Common myeloid progenitor, CD34-positive (primary cell): ENCODE measurements at regions of chr22 and their contacts with region 1.

Region 1: DNA sequence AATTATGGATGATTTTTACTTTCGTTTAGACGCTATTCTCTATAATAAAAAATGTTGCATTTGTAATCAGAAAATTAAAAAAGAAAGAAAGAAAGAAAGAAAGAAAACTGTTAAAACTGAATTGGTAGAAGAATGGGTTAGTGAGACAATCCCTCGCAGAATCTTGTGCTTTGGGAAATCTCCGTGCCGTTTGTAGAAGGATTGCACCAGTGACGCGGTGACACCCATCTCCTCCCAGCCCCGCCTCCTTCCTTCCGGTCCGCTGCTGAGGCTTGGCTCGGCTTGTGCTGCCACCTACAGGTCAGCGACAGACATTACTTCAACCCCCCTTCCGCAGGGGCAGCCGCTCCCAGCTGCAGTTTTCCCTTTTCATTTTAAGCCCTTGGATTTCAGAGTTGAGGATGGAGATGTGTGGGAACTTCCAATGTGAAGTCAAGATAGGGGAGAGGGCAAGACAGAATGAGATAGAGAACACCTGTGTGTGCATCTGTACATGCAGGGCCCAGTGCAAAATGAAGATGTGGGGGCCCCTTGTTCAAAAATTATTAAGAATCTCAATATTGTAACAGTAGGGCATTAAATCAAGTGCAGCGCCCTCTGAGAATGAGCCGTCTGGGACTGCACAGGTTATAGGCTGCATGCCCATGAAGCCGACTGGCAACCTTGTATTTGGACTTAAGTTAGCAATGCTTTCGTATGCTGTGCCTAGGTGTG is 41.1 kb downstream of the TST start:
- DNase-seq: peak; percentile 86 to 92 (median 90)
- H3K4me3 ChIP-seq: peak overlapping the region in 6 of 7 experiments; percentile 57 to 82 (median 69)
- H3K27ac ChIP-seq: peak overlapping the region in 1 of 2 experiments; percentile 61
- H3K4me1 ChIP-seq: peaks cover 0 to 9% (median 7%) of the 10 kb centered on the region in 4 experiments
- H3K27me3 ChIP-seq: peaks cover 0 to 3% (median 0%) of the 10 kb centered on the region in 5 experiments

Region 2: GRCh38 chr22:36966851-36967540 is 11.1 kb before region 1 on chr22:
- CTCF ChIA-PET with region 1: interaction called, 29 read pairs
- POLR2A ChIA-PET with region 1: interaction called, 4 read pairs
- DNase-seq: no peak
- H3K4me3 ChIP-seq: no peak overlapping the region
- H3K27ac ChIP-seq: no peak overlapping the region
- H3K4me1 ChIP-seq: peaks cover 0 to 7% (median 0%) of the 10 kb centered on the region in 4 experiments
- H3K27me3 ChIP-seq: no peaks in the 10 kb centered on the region

Region 3: DNA sequence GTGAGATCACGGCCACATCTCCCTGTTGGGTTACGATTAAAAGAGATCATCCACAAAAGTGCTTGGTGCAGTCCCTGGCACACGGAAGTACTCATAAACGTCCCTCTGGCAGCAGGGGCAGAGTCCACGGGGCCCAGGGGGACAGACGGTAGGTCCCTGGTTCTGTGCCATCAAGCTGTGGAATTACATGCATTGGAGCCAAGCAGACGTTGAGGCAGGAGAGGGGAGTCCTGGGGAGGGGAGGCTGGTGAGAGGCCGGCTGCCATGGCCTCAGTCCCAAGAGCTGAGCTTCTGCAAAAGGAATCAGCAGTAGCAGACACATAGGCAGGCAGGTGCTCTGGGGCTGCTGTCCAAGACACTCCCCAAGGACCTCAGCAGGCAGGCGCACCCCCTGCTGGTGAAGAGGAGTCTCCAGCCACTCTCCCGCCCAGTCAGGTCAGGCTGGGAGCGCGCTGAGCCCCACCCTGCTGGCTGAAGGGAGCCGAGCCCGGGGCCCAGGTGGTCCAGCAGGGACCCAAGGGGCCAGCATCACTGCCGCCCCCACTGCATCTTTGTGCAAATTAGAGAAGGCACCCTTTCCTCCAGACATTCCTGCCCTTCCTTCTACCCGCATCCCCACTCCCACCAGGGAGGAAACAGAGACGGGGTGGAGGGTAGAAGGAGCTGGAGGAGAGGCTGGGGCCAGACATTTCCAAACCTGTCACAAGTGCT is 65.9 kb after region 1 on chr22:
- CTCF ChIA-PET with region 1: interaction called, 17 read pairs
- POLR2A ChIA-PET with region 1: no interaction called
- DNase-seq: peak; percentile 60 to 81 (median 80)
- H3K4me3 ChIP-seq: no peak overlapping the region
- H3K27ac ChIP-seq: no peak overlapping the region
- H3K4me1 ChIP-seq: peaks cover 0 to 4% (median 1%) of the 10 kb centered on the region in 4 experiments
- H3K27me3 ChIP-seq: peaks cover 0 to 2% (median 0%) of the 10 kb centered on the region in 5 experiments